Aorta (tissue), 5 donors: ENCODE measurements at regions of chr6 and their contacts with region 1.

Region 1: DNA sequence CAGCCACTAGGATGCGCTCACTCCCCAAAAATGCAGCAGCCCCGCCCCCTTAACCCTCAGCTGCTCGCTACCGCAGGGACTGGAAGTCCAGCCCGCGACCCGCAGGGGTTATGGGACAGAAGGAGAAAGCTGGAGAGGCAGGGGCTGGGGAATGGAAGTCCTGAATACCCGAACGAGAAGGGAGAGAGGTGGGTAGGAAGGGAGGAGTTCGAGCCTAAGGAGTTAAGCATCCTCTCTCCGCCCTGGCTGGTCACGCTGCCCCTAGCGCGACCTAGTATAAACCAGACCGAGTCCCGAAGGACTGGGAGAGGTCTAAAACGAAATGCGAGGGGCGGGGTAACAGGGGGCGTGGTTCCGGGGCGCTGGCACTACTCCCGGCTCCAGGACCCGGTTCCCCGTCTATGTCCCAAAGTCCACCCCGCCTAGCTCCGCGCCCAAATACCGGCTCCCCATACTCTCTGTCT is 448 bp upstream of the DDAH2 start:
- DNase-seq: peak; percentile 96 to 97
- ATAC-seq: peak; percentile 93
- H3K4me3 ChIP-seq: peak overlapping the region; percentile 83 to 92
- H3K27ac ChIP-seq: peak overlapping the region; percentile 88 to 94
- H3K4me1 ChIP-seq: no peaks in the 10 kb centered on the region
- H3K27me3 ChIP-seq: no peaks in the 10 kb centered on the region

Region 2: DNA sequence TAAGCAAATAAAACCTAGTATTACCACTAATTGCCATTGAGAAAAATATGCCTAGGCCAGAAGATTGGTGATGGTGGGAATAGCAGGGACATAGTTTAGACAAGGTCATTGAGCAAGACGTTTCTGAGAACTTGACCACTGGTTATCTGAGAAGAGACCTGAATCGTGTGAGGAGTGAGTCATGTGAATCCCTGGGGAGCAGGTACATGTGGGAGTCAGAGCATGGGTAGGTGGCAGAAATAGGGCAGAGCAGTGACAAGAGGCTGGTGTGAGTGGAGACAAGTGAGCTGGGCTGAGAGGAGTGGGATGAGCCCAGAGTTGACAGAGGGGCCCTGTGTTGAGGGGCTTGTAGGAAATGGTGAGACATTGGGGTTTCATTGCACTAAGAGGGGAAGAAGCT is 309.7 kb before region 1 on chr6:
- intact Hi-C with region 1: no loop called
- DNase-seq: no peak
- ATAC-seq: no peak
- H3K4me3 ChIP-seq: no peak overlapping the region
- H3K27ac ChIP-seq: no peak overlapping the region
- H3K4me1 ChIP-seq: no peaks in the 10 kb centered on the region
- H3K27me3 ChIP-seq: no peaks in the 10 kb centered on the region

Region 3: DNA sequence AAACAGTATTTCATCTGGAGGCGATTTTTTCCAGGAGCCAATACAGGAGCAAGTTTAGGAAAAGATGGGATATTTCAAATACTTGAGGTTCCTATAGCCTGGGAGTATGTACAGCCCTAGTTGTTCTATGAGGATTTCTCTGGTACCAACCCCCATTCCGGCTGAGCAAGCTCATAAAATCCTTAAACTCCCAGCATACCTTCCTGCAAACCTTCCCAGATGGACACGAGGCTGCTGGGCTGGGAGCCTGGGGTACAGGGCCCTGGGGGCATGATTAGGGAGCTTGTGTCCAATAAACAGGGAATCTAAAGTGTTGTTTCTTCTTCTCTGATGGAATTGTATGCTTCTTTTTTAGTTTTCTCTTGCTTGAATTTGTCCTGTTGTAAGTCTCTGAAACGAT is 107.6 kb before region 1 on chr6:
- intact Hi-C with region 1: no loop called
- DNase-seq: no peak
- ATAC-seq: no peak
- H3K4me3 ChIP-seq: no peak overlapping the region
- H3K27ac ChIP-seq: no peak overlapping the region
- H3K4me1 ChIP-seq: no peaks in the 10 kb centered on the region
- H3K27me3 ChIP-seq: no peaks in the 10 kb centered on the region

Region 4: DNA sequence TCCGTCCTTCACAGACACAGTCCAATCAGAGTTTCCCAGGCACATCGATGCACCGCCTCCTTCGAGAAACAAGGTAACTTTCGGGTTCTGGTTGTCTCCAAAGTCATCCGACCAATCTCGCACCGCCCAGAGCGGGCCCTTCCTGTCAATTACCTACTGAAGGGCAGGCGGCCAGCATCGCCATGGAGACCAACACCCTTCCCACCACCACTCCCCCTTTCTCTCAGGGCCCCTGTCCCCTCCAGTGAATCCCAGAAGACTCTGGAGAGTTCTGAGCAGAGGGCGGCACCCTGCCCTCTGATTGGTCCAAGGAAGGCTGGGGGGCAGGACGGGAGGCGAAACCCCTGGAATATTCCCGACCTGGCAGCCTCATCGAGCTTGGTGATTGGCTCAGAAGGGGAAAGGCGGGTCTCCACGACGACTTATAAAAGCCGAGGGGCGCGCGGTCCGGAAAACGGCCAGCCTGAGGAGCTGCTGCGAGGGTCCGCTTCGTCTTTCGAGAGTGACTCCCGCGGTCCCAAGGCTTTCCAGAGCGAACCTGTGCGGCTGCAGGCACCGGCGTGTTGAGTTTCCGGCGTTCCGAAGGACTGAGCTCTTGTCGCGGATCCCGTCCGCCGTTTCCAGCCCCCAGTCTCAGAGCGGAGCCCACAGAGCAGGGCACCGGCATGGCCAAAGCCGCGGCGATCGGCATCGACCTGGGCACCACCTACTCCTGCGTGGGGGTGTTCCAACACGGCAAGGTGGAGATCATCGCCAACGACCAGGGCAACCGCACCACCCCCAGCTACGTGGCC is 97.9 kb after region 1 on chr6 and contains the start of gene HSPA1B:
- intact Hi-C with region 1: loop called in 1 of 2 experiments (anchors 1 kb)
- DNase-seq: peak; percentile 99
- ATAC-seq: peak; percentile 94
- H3K4me3 ChIP-seq: peak within 1 kb of the TSS; percentile 42 to 57
- H3K27ac ChIP-seq: peak within 1 kb of the TSS; percentile 98 to 99
- H3K4me1 ChIP-seq: peaks cover 0 to 3% of the 10 kb centered on the region in 2 donors
- H3K27me3 ChIP-seq: peaks cover 0 to 2% of the 10 kb centered on the region in 2 donors
- total RNA-seq, gene HSPA1B: 155 to 332 TPM

Region 5: DNA sequence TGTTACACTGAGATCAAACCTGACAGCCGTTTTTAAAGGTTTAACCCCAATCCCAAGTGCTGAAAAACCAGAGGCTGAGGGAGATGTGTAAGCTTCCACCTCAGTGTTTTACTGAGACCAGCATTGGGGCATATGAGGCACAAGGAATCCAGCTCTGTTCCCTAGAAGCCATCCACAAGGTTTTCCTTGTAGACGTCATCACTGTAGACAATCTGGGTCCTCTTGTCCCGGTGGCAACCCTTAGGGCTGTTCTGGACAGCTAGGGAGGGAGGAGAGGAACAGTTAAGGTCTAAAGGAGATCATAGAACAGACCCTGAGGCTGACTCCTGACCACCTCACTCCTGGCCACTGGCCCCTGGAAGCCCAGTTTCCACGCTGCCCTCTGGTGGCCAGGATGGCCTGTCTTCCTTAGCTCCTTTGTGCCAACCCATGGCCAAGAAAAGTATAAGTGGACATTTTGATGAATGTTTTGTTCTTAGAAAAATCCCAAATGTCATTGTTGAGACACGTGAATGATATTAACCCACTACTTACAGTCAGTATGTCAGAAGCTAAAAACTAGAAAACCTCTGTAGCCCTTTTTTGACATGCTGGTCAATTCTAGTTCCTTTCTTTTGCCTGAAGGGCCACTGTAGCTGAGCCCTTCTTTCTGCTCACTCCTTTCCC is 222.7 kb after region 1 on chr6:
- intact Hi-C with region 1: loop called in 1 of 2 experiments (anchors 5 kb)
- DNase-seq: peak; percentile 80 to 90
- ATAC-seq: peak; percentile 62
- H3K4me3 ChIP-seq: no peak overlapping the region
- H3K27ac ChIP-seq: no peak overlapping the region
- H3K4me1 ChIP-seq: no peaks in the 10 kb centered on the region
- H3K27me3 ChIP-seq: no peaks in the 10 kb centered on the region